ENCODE measurements at regions of chr2 and their contacts with region 1.

Region 1: DNA sequence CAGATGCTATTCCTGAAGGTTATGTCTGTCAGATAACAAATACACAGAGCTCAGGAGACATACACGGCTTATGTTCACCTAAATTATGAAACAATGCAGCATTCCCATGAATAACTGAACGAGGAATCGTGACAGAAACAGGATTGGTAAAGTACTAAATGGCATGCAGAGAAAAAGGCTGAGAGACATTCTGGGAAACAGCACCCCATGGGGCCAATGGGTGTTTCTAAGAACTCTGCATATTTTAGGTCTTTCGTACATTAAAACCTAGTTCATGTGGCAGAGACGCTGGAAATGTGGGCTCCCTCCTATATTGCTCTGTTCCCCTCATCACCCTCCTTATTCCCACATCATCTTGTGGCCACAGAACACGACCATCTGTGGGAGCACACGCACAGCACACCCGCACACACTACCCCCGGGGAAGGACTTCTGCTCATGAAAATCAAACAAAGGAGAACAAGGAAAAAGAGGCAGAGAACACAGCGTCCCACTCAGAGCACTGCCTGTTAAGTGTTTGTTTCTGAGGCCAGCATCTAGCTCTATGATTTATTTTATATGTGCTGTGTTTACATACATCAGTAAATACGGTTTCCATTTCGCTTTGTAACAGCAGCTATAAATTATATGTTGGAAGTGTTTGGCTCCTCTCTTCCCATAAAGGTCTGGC is 143.6 kb downstream of the AFF3 start:
- DNase-seq: no peak
- ATAC-seq: no peak
- H3K4me3 Mint-ChIP-seq: no peak overlapping the region
- H3K27ac Mint-ChIP-seq: no peak overlapping the region
- H3K4me1 Mint-ChIP-seq: peaks cover 4% of the 10 kb centered on the region
- H3K27me3 Mint-ChIP-seq: no peaks in the 10 kb centered on the region
- CTCF ChIP-seq: no peak

Region 2: GRCh38 chr2:99765731-99766335 is 233.0 kb before region 1 on chr2:
- CTCF ChIA-PET with region 1: no interaction called
- POLR2A ChIA-PET with region 1: no interaction called
- intact Hi-C with region 1: no loop called
- DNase-seq: no peak
- ATAC-seq: no peak
- H3K4me3 Mint-ChIP-seq: no peak overlapping the region
- H3K27ac Mint-ChIP-seq: no peak overlapping the region
- H3K4me1 Mint-ChIP-seq: peaks cover 9% of the 10 kb centered on the region
- H3K27me3 Mint-ChIP-seq: no peaks in the 10 kb centered on the region
- CTCF ChIP-seq: no peak

Region 3: GRCh38 chr2:99988599-99988998 is 10.2 kb before region 1 on chr2:
- CTCF ChIA-PET with region 1: no interaction called
- POLR2A ChIA-PET with region 1: interaction called, 19 read pairs
- intact Hi-C with region 1: loop called (anchors 2 kb)
- DNase-seq: no peak
- ATAC-seq: no peak
- H3K4me3 Mint-ChIP-seq: no peak overlapping the region
- H3K27ac Mint-ChIP-seq: peak overlapping the region; percentile 32
- H3K4me1 Mint-ChIP-seq: peaks cover 8% of the 10 kb centered on the region
- H3K27me3 Mint-ChIP-seq: no peaks in the 10 kb centered on the region
- CTCF ChIP-seq: no peak

Region 4: GRCh38 chr2:100070078-100070477 is 71.3 kb after region 1 on chr2:
- CTCF ChIA-PET with region 1: no interaction called
- POLR2A ChIA-PET with region 1: no interaction called
- intact Hi-C with region 1: no loop called
- DNase-seq: no peak
- ATAC-seq: no peak
- H3K4me3 Mint-ChIP-seq: no peak overlapping the region
- H3K27ac Mint-ChIP-seq: peak overlapping the region; percentile 59
- H3K4me1 Mint-ChIP-seq: peaks cover 75% of the 10 kb centered on the region
- H3K27me3 Mint-ChIP-seq: no peaks in the 10 kb centered on the region
- CTCF ChIP-seq: no peak